GM12878 (cell line): ENCODE measurements at regions of chr2 and their contacts with region 1.

Region 1: GRCh38 chr2:152505495-152505906 is 170.5 kb downstream of the FMNL2 start:
- DNase-seq: peak; percentile 35
- ATAC-seq: peak; percentile 89
- H3K4me3 ChIP-seq: no peak overlapping the region
- H3K27ac ChIP-seq: peak overlapping the region; percentile 29; the same call in 1 of the 2 replicates
- H3K4me1 ChIP-seq: peaks cover 11% of the 10 kb centered on the region; the same call in 1 of the 2 replicates
- H3K27me3 ChIP-seq: no peaks in the 10 kb centered on the region; a peak in 1 of 4 replicates
- CTCF ChIP-seq: no peak
- EP300 ChIP-seq: peak in 1 of 2 experiments; percentile 46; a peak in 1 of 4 replicates
- POLR2A ChIP-seq: no peak
- RAD21 ChIP-seq: no peak

Region 2: GRCh38 chr2:152566728-152567069 is 61.2 kb after region 1 on chr2:
- CTCF ChIA-PET with region 1: no interaction called
- POLR2A ChIA-PET with region 1: interaction called, 4 read pairs
- RAD21 ChIA-PET with region 1: interaction called, 6 read pairs
- SMC1A ChIA-PET with region 1: interaction called, 19 read pairs
- in situ Hi-C with region 1: no loop called
- intact Hi-C with region 1: loop called (anchors 1 kb)
- DNase-seq: peak; percentile 64
- ATAC-seq: peak; percentile 54
- H3K4me3 ChIP-seq: no peak overlapping the region
- H3K27ac ChIP-seq: peak overlapping the region; percentile 65
- H3K4me1 ChIP-seq: peaks cover 28% of the 10 kb centered on the region
- H3K27me3 ChIP-seq: no peaks in the 10 kb centered on the region
- CTCF ChIP-seq: no peak
- EP300 ChIP-seq: 0 out of 4 replicates have a peak, but pooled peaks of 1 of the 2 experiments have one; percentile 45
- POLR2A ChIP-seq: no peak
- RAD21 ChIP-seq: no peak

Region 3: GRCh38 chr2:152781175-152781574 is 275.7 kb after region 1 on chr2:
- CTCF ChIA-PET with region 1: no interaction called
- POLR2A ChIA-PET with region 1: no interaction called
- RAD21 ChIA-PET with region 1: no interaction called
- SMC1A ChIA-PET with region 1: no interaction called
- in situ Hi-C with region 1: no loop called
- intact Hi-C with region 1: no loop called
- DNase-seq: no peak
- ATAC-seq: no peak
- H3K4me3 ChIP-seq: no peak overlapping the region
- H3K27ac ChIP-seq: no peak overlapping the region
- H3K4me1 ChIP-seq: no peaks in the 10 kb centered on the region
- H3K27me3 ChIP-seq: no peaks in the 10 kb centered on the region; a peak in 1 of 4 replicates
- CTCF ChIP-seq: no peak
- EP300 ChIP-seq: no peak
- POLR2A ChIP-seq: no peak
- RAD21 ChIP-seq: no peak